Left lung (tissue), 14 donors: ENCODE measurements at regions of chr5 and their contacts with region 1.

Region 1: DNA sequence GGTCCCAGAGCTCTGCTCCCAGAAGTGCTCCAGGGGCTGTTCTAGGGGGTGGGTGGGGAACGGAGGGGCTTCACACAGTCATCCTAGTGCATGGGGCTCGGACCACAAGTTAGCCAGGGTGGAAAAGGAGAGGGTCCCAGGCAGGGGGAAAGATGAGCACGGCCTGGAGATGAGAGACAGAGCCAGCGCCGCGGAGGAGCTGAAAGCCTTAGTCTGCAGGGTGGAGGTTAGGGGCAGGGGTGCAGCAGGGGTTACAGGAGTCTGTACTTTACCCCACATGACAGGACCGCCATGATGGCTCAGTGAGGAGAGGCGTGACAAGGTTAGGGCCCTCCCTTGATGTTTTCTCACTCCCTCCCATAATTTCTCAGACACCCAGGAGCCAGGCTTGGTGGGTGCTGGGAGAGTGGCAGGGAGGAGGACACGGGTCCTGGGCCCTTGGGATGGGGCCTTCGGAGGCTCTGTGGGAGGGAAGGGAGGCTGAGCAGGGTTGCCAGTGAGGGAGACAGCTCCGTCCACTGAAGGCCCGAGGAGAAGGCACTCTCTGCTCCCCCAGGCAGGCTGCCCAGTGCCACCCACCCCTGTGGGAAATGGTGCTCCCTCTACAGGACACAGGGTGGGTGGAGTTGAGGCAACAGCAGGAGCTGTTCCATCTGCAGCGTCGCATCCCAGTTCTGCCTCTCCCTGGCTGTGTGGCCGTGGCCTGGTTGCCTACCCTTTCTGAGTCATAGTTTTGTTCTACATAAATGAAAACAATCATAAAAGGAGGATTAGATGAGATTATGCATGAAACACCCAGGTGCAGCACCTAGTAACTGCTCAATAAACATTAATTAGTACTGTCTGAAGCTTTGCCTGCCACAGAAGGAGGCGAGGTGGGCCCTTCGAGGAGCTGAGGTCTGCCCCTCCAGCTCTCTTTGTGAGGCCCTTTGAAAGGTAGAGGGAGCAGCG is 66.2 kb downstream of the NDST1 start:
- DNase-seq: peak in 1 of 4 donors; percentile 29
- ATAC-seq: no peak
- H3K4me3 ChIP-seq: no peak overlapping the region
- H3K27ac ChIP-seq: no peak overlapping the region
- H3K4me1 ChIP-seq: no peaks in the 10 kb centered on the region
- H3K27me3 ChIP-seq: no peaks in the 10 kb centered on the region
- CTCF ChIP-seq: no peak

Region 2: DNA sequence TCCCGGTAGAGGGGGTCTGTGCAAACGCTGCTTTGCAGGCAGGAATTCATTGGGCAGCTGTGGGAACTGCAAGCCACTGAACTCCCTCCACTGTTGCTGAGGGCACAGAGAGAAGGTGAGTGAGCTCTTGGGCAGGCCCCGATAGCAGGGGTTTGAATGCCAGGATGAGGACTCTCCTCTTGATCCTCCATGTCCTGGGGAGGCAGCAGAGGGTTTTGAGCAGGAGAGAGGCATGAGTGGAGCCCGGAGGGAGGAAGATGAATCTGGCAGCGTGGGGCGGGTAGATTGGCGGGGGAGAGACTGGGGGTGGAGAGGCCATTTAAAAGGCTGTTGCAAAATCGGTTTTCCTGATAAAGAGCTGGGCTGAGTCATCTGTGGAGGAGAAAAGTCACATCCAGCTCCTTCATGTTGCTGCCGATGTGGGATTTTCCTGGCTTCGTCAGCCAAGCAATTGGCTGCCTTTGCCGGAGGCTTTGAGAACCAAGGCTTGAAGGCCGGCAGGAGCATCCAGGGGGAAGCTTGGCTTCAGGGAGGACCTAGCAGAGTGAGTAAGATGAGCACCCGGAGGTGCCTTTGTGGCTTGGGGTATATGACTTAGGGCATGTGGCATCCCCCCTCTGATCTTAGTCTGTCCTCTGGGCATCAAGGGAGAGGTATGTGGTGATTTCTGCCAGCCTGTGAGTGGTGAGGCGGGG is 66.3 kb after region 1 on chr5 and contains the start of gene SYNPO:
- intact Hi-C with region 1: loop called in 1 of 2 experiments (anchors 10 kb)
- DNase-seq: peak in 3 of 4 donors; percentile 74 to 88 (median 77)
- ATAC-seq: peak; percentile 49
- H3K4me3 ChIP-seq: peak within 1 kb of the TSS; percentile 16 to 32
- H3K27ac ChIP-seq: peak within 1 kb of the TSS; percentile 74 to 88
- H3K4me1 ChIP-seq: peaks cover 67 to 97% of the 10 kb centered on the region in 2 donors
- H3K27me3 ChIP-seq: no peaks in the 10 kb centered on the region
- CTCF ChIP-seq: no peak
- polyA plus RNA-seq, gene SYNPO: 22.0 to 31.6 (median 26.6) TPM